Activated B cell treated with CpG ODN at 0.5 μM for 24 hours (primary cell): ENCODE measurements at regions of chr12 and their contacts with region 1.

Region 1: DNA sequence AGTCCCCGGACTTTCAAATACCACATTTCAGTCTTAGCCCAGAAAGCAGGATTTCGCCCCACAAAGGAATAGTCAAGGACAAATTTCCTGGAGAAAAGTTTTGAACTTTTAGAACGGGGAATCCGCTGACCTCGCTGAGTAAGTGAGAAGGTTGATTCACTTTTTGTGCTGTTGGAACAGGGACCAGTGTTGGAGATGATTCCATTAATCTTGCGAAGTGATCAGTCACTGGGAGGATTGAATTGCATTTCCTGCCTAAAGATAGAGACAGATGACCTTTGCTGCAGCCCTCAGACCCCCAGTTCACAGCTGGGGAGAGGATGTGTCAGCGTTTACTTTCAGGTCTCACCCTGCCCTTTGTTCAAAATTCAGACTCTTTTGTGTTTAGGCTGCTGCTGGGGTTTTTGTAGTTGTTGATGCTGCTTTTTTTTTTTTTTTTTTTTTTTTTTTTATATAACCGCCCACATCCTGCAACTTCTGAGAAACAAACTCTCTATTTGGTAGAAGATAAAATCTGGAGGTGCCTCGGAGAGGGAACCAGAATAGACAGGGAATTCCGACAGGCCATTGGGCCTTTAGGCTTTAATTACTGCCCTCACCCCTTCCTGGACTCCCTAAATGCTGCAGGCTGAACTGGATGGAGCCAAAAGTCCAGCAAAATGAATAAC is 9.8 kb upstream of the KDM2B start:
- DNase-seq: peak; percentile 33
- ATAC-seq: peak; percentile 65
- H3K4me3 Mint-ChIP-seq: peak overlapping the region; percentile 81
- H3K27ac Mint-ChIP-seq: peak overlapping the region; percentile 98
- H3K4me1 Mint-ChIP-seq: peaks cover 40% of the 10 kb centered on the region
- H3K27me3 Mint-ChIP-seq: no peaks in the 10 kb centered on the region
- CTCF ChIP-seq: no peak

Region 2: GRCh38 chr12:121550974-121551634 is 39.5 kb before region 1 on chr12:
- CTCF ChIA-PET with region 1: interaction called, 18 read pairs
- POLR2A ChIA-PET with region 1: interaction called, 25 read pairs
- intact Hi-C with region 1: no loop called
- DNase-seq: no peak
- ATAC-seq: no peak
- H3K4me3 Mint-ChIP-seq: no peak overlapping the region
- H3K27ac Mint-ChIP-seq: no peak overlapping the region
- H3K4me1 Mint-ChIP-seq: peaks cover 24% of the 10 kb centered on the region
- H3K27me3 Mint-ChIP-seq: no peaks in the 10 kb centered on the region
- CTCF ChIP-seq: no peak

Region 3: GRCh38 chr12:121579981-121580868 is 10.4 kb before region 1 on chr12:
- CTCF ChIA-PET with region 1: interaction called, 3 read pairs
- POLR2A ChIA-PET with region 1: interaction called, 42 read pairs
- intact Hi-C with region 1: loop called (anchors 1 kb)
- DNase-seq: peak; percentile 60
- ATAC-seq: peak; percentile 52
- H3K4me3 Mint-ChIP-seq: peak overlapping the region; percentile 95
- H3K27ac Mint-ChIP-seq: peak overlapping the region; percentile 95
- H3K4me1 Mint-ChIP-seq: peaks cover 45% of the 10 kb centered on the region
- H3K27me3 Mint-ChIP-seq: no peaks in the 10 kb centered on the region
- CTCF ChIP-seq: no peak

Region 4: DNA sequence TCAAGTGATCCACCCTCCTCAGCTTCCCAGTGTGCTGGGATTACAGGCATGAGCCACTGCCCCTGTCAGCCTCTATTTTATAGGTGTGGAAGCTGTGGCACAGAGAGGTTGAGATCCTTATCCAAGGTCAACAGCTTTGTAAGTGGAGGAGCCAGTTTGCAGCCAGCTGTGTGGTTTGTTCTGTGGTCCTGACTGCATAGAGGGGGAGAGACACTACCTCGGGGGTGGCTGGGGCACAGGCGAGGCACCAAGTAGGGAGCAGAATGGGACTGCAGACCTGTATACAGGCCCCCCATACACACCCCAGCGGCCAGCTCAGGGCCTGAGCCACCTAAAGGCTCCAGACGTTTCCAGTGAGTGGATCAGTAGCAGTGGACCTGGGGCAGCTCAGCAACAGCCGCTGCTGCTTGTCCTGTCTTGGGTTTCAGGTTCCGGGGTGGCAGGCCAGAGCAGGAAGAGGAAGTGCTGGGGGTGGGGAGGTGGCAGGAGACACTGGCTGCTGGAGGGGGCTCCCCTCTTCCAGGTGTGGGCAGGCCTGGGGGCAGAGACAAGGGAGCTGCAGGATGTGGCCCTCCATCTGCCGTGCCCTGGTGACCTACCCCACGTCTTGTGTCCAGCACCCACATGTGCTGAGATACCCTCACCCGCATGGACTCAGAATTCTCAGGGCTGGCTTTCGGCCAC is 46.8 kb after region 1 on chr12:
- CTCF ChIA-PET with region 1: no interaction called
- POLR2A ChIA-PET with region 1: interaction called, 12 read pairs
- intact Hi-C with region 1: no loop called
- DNase-seq: peak; percentile 52
- ATAC-seq: peak; percentile 88
- H3K4me3 Mint-ChIP-seq: peak overlapping the region; percentile 53
- H3K27ac Mint-ChIP-seq: peak overlapping the region; percentile 84
- H3K4me1 Mint-ChIP-seq: peaks cover 50% of the 10 kb centered on the region
- H3K27me3 Mint-ChIP-seq: no peaks in the 10 kb centered on the region
- CTCF ChIP-seq: no peak

Region 5: GRCh38 chr12:121688966-121689365 is 98.4 kb after region 1 on chr12:
- CTCF ChIA-PET with region 1: no interaction called
- POLR2A ChIA-PET with region 1: interaction called, 5 read pairs
- intact Hi-C with region 1: loop called (anchors 1 kb)
- DNase-seq: no peak
- ATAC-seq: no peak
- H3K4me3 Mint-ChIP-seq: no peak overlapping the region
- H3K27ac Mint-ChIP-seq: no peak overlapping the region
- H3K4me1 Mint-ChIP-seq: peaks cover 7% of the 10 kb centered on the region
- H3K27me3 Mint-ChIP-seq: no peaks in the 10 kb centered on the region
- CTCF ChIP-seq: no peak